ENCODE measurements at regions of chr9 and their contacts with region 1.

Region 1: GRCh38 chr9:15541872-15542271 is 11.0 kb upstream of the CCDC171 start:
- DNase-seq: no peak
- ATAC-seq: no peak
- H3K4me3 ChIP-seq: no peak overlapping the region
- H3K4me3 Mint-ChIP-seq: no peak overlapping the region
- H3K27ac ChIP-seq: no peak overlapping the region
- H3K27ac Mint-ChIP-seq: no peak overlapping the region
- H3K4me1 ChIP-seq: no peaks in the 10 kb centered on the region
- H3K4me1 Mint-ChIP-seq: no peaks in the 10 kb centered on the region
- H3K27me3 ChIP-seq: no peaks in the 10 kb centered on the region
- H3K27me3 Mint-ChIP-seq: no peaks in the 10 kb centered on the region
- CTCF ChIP-seq: no peak

Region 2: DNA sequence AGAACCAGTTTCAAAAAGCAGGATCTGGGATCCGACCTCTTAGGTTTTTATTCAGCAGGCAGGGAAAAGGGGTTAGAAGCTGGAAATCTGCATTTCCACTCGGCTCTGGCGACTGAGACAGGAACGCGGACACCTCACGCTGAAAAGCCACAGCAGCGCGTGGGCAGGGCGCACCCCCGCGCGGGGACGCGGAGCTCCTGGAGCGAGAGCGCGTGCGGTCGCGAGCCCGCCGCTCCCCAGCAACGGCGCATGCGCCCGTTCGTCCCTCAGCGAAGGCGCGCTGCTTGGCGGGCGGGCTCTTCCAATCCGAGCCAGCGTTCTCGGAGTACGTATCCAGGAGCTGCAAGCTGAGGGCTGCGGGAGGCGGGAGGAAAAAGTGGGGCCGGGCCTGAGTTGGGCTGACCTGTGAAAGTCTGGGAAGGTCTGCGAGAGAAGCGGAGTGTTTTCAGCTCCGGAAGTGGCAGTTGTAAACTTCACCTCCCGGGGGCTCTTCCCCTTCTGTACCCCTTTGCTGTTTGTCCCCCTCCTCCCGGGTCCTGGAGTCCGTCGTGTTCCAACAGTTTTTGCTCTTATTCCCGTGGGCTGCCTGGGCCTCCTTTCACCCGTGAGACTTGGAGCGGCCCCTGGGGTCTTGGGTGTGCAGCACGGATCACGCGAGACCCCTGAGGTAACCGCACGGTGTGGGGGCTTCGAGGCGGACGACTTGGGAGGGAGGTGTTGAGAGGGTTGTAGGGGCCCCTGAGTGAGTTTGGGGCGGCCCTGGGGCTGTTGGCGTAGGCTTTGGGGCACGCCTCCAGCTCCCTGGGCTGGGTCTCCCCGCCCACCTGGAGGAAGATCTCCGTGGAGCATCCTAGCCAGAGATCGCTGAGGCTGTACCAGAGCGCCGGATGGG is 11.0 kb after region 1 on chr9 and contains the start of gene CCDC171:
- CTCF ChIA-PET with region 1: interaction called, 10 read pairs
- POLR2A ChIA-PET with region 1: interaction called, 6 read pairs
- intact Hi-C with region 1: no loop called
- DNase-seq: peak; percentile 67 to 96 (median 84)
- ATAC-seq: peak; percentile 79
- H3K4me3 ChIP-seq: peak within 1 kb of the TSS; percentile 88 to 98
- H3K4me3 Mint-ChIP-seq: peak within 1 kb of the TSS; percentile 95
- H3K27ac ChIP-seq: peak within 1 kb of the TSS; percentile 54 to 75
- H3K27ac Mint-ChIP-seq: peak within 1 kb of the TSS; percentile 82
- H3K4me1 ChIP-seq: no peaks in the 10 kb centered on the region
- H3K4me1 Mint-ChIP-seq: peaks cover 9% of the 10 kb centered on the region
- H3K27me3 ChIP-seq: no peaks in the 10 kb centered on the region
- H3K27me3 Mint-ChIP-seq: no peaks in the 10 kb centered on the region
- CTCF ChIP-seq: no peak
- total RNA-seq, gene CCDC171: 1.1 to 1.7 TPM

Region 3: DNA sequence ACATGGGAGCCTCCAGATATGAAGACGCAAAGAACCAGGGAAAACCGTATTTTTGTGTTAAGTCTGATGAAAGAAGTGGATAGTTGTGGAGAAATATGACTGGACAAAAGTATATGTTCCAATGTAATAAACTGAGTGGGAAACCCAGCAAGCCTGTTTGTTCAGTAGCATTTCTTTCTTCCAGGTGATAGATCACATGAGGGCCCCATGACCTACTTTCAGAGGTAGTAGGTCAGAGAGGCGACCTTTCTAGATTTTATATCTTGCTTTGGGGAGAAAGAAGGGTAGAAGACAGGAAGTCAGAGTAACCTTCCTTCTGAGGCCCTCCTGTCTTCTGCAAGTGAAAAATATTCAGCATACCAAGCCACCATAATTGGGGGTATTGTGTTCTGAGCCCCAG is 42.5 kb after region 1 on chr9:
- CTCF ChIA-PET with region 1: no interaction called
- POLR2A ChIA-PET with region 1: no interaction called
- intact Hi-C with region 1: no loop called
- DNase-seq: no peak
- ATAC-seq: no peak
- H3K4me3 ChIP-seq: no peak overlapping the region
- H3K4me3 Mint-ChIP-seq: no peak overlapping the region
- H3K27ac ChIP-seq: no peak overlapping the region
- H3K27ac Mint-ChIP-seq: no peak overlapping the region
- H3K4me1 ChIP-seq: no peaks in the 10 kb centered on the region
- H3K4me1 Mint-ChIP-seq: peaks cover 2% of the 10 kb centered on the region
- H3K27me3 ChIP-seq: no peaks in the 10 kb centered on the region
- H3K27me3 Mint-ChIP-seq: no peaks in the 10 kb centered on the region
- CTCF ChIP-seq: no peak